CD4-positive, alpha-beta memory T cell (primary cell): ENCODE measurements at regions of chr9 and their contacts with region 1.

Region 1: GRCh38 chr9:33404788-33405362 is 2.5 kb upstream of the AQP7 start:
- DNase-seq: no peak
- H3K4me3 ChIP-seq: no peak overlapping the region
- H3K4me3 Mint-ChIP-seq: no peak overlapping the region
- H3K27ac ChIP-seq: no peak overlapping the region
- H3K27ac Mint-ChIP-seq: peak overlapping the region in 6 of 7 donors; percentile 63 to 92 (median 84)
- H3K4me1 ChIP-seq: peaks cover 10% of the 10 kb centered on the region
- H3K4me1 Mint-ChIP-seq: peaks cover 6 to 16% (median 11%) of the 10 kb centered on the region in 4 donors
- H3K27me3 ChIP-seq: no peaks in the 10 kb centered on the region
- H3K27me3 Mint-ChIP-seq: no peaks in the 10 kb centered on the region

Region 2: GRCh38 chr9:33446946-33447798 is 42.3 kb after region 1 on chr9 and contains the start of gene AQP3:
- CTCF ChIA-PET with region 1: interaction called, 345 read pairs
- POLR2A ChIA-PET with region 1: interaction called, 27 read pairs
- intact Hi-C with region 1: loop called (anchors 1 kb)
- DNase-seq: peak; percentile 76 to 84 (median 76)
- H3K4me3 ChIP-seq: peak within 1 kb of the TSS; percentile 68 to 73
- H3K4me3 Mint-ChIP-seq: peak within 1 kb of the TSS; percentile 92 to 98 (median 94)
- H3K27ac ChIP-seq: peak within 1 kb of the TSS; percentile 75
- H3K27ac Mint-ChIP-seq: peak within 1 kb of the TSS; percentile 94 to 98 (median 96)
- H3K4me1 ChIP-seq: peaks cover 65% of the 10 kb centered on the region
- H3K4me1 Mint-ChIP-seq: peaks cover 31 to 74% (median 48%) of the 10 kb centered on the region in 4 donors
- H3K27me3 ChIP-seq: no peaks in the 10 kb centered on the region
- H3K27me3 Mint-ChIP-seq: no peaks in the 10 kb centered on the region
- total RNA-seq, gene AQP3: 172 TPM

Region 3: DNA sequence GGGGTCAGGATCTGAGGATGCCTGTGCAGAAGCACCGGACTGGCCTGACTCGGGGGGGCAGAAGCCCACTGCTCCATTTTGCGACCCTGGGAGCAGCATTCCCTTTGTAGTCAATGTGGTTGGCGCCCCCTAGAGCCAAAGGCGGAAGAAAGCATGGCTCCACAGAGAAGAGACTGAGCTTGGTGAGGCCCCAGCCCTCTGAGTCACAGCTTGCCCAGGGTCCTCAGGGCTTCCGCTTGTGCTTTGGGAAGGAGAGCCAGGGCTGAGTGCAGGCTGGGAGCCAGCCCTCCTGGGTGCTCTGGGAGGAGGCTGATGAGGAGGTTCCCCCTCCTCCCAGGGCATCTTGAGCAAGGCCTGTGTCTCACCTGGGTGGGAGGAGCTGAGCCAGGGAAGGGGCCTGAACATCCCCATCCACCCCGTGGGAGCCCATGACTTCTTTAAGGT is 48.0 kb after region 1 on chr9:
- CTCF ChIA-PET with region 1: interaction called, 345 read pairs
- POLR2A ChIA-PET with region 1: interaction called, 27 read pairs
- intact Hi-C with region 1: no loop called
- DNase-seq: peak; percentile 24 to 50 (median 40)
- H3K4me3 ChIP-seq: no peak overlapping the region
- H3K4me3 Mint-ChIP-seq: peak overlapping the region in 7 of 8 donors; percentile 3 to 65 (median 32)
- H3K27ac ChIP-seq: peak overlapping the region; percentile 36
- H3K27ac Mint-ChIP-seq: peak overlapping the region; percentile 55 to 87 (median 83)
- H3K4me1 ChIP-seq: peaks cover 69% of the 10 kb centered on the region
- H3K4me1 Mint-ChIP-seq: peaks cover 43 to 70% (median 57%) of the 10 kb centered on the region in 4 donors
- H3K27me3 ChIP-seq: no peaks in the 10 kb centered on the region
- H3K27me3 Mint-ChIP-seq: no peaks in the 10 kb centered on the region

Region 4: GRCh38 chr9:33466565-33467495 is 62.0 kb after region 1 on chr9:
- CTCF ChIA-PET with region 1: interaction called, 170 read pairs
- POLR2A ChIA-PET with region 1: interaction called, 27 read pairs
- intact Hi-C with region 1: loop called (anchors 1 kb)
- DNase-seq: peak; percentile 57 to 77 (median 61)
- H3K4me3 ChIP-seq: no peak overlapping the region
- H3K4me3 Mint-ChIP-seq: no peak overlapping the region
- H3K27ac ChIP-seq: no peak overlapping the region
- H3K27ac Mint-ChIP-seq: peak overlapping the region; percentile 13 to 83 (median 50)
- H3K4me1 ChIP-seq: peaks cover 6% of the 10 kb centered on the region
- H3K4me1 Mint-ChIP-seq: peaks cover 5 to 12% (median 7%) of the 10 kb centered on the region in 4 donors
- H3K27me3 ChIP-seq: no peaks in the 10 kb centered on the region
- H3K27me3 Mint-ChIP-seq: no peaks in the 10 kb centered on the region

Region 5: DNA sequence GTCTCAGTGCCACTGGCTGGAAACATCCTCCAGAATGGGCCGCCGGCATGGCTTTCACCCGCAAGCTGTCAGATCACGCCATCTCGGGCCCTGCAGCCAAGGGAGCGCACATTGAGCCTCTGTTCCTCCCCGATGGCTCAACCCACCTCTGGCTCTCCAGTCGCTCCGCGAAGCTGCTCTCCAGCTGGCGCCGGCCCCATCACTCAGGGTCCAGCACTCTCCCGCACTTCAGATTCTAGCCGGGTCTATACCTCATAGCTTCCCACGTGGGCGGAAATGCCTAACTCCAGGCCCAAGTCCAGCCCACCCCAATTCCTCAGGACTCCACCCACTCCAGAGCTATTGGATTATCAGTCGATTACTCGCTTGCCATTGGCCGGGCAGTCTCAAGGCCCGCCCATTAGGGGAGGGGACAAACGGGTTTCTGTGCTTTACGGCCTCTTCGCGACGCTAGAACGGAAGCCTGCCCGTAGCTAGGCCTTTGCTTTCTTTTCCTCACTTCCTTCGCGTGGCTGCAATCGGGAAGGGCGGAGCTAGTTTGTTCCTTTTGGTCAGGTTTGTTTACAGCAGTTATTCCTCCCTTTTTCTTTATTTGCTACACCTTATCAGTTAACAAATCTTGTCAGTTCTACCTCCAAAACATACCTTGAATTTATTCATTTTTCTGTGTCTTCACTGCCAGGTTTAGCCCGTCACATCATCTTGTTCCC is 68.9 kb after region 1 on chr9 and contains the start of gene NOL6:
- CTCF ChIA-PET with region 1: interaction called, 170 read pairs
- POLR2A ChIA-PET with region 1: interaction called, 9 read pairs
- intact Hi-C with region 1: no loop called
- DNase-seq: peak; percentile 98 to 99 (median 98)
- H3K4me3 ChIP-seq: peak within 1 kb of the TSS; percentile 80 to 93
- H3K4me3 Mint-ChIP-seq: peak within 1 kb of the TSS; percentile 95 to 100 (median 99)
- H3K27ac ChIP-seq: peak within 1 kb of the TSS; percentile 62
- H3K27ac Mint-ChIP-seq: peak within 1 kb of the TSS; percentile 90 to 100 (median 97)
- H3K4me1 ChIP-seq: peaks cover 27% of the 10 kb centered on the region
- H3K4me1 Mint-ChIP-seq: peaks cover 11 to 36% (median 28%) of the 10 kb centered on the region in 4 donors
- H3K27me3 ChIP-seq: no peaks in the 10 kb centered on the region
- H3K27me3 Mint-ChIP-seq: no peaks in the 10 kb centered on the region
- total RNA-seq, gene NOL6: 39.1 to 41.1 TPM

Region 6: GRCh38 chr9:33510264-33511183 is 105.6 kb after region 1 on chr9:
- CTCF ChIA-PET with region 1: interaction called, 12 read pairs
- POLR2A ChIA-PET with region 1: no interaction called
- intact Hi-C with region 1: no loop called
- DNase-seq: peak; percentile 25 to 45 (median 33)
- H3K4me3 ChIP-seq: peak overlapping the region; percentile 41 to 76
- H3K4me3 Mint-ChIP-seq: peak overlapping the region; percentile 95 to 98 (median 96)
- H3K27ac ChIP-seq: no peak overlapping the region
- H3K27ac Mint-ChIP-seq: peak overlapping the region; percentile 52 to 97 (median 93)
- H3K4me1 ChIP-seq: no peaks in the 10 kb centered on the region
- H3K4me1 Mint-ChIP-seq: peaks cover 2 to 4% (median 3%) of the 10 kb centered on the region in 4 donors
- H3K27me3 ChIP-seq: no peaks in the 10 kb centered on the region
- H3K27me3 Mint-ChIP-seq: peaks cover 0 to 2% of the 10 kb centered on the region in 2 donors

Region 7: GRCh38 chr9:33517373-33517772 is 112.5 kb after region 1 on chr9:
- CTCF ChIA-PET with region 1: interaction called, 13 read pairs
- POLR2A ChIA-PET with region 1: interaction called, 4 read pairs
- intact Hi-C with region 1: loop called (anchors 1 kb)
- DNase-seq: peak in 1 of 5 donors; percentile 20
- H3K4me3 ChIP-seq: no peak overlapping the region
- H3K4me3 Mint-ChIP-seq: no peak overlapping the region
- H3K27ac ChIP-seq: no peak overlapping the region
- H3K27ac Mint-ChIP-seq: no peak overlapping the region
- H3K4me1 ChIP-seq: no peaks in the 10 kb centered on the region
- H3K4me1 Mint-ChIP-seq: no peaks in the 10 kb centered on the region
- H3K27me3 ChIP-seq: no peaks in the 10 kb centered on the region
- H3K27me3 Mint-ChIP-seq: peaks cover 7 to 9% of the 10 kb centered on the region in 2 donors

Region 8: GRCh38 chr9:34430843-34431437 is 1026.1 kb after region 1 on chr9:
- CTCF ChIA-PET with region 1: no interaction called
- POLR2A ChIA-PET with region 1: no interaction called
- intact Hi-C with region 1: no loop called
- DNase-seq: peak in 1 of 5 donors; percentile 9
- H3K4me3 ChIP-seq: no peak overlapping the region
- H3K4me3 Mint-ChIP-seq: no peak overlapping the region
- H3K27ac ChIP-seq: no peak overlapping the region
- H3K27ac Mint-ChIP-seq: no peak overlapping the region
- H3K4me1 ChIP-seq: no peaks in the 10 kb centered on the region
- H3K4me1 Mint-ChIP-seq: peaks cover 0 to 3% (median 0%) of the 10 kb centered on the region in 4 donors
- H3K27me3 ChIP-seq: no peaks in the 10 kb centered on the region
- H3K27me3 Mint-ChIP-seq: no peaks in the 10 kb centered on the region